Cardiac septum (tissue), 1 donor: ENCODE measurements at regions of chr6 and their contacts with region 1.

Region 1: DNA sequence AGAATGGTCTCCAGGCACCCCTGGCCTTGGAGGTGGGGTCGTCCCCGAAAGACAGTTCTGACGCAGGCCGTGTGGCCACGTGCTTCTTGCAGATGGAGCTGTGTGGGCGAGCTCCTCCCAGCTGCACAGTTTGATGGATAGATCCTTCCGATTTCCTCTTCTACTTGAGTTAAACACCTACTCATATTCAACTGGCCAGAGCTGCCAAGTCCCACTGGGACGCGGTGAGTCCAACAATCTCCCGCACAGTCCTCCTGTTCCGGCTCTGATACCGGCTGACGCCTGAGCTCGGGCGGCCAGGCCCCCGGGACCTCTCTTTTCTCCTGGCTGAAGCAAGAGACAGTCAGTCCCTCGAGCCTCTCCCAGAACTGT is 57.9 kb upstream of the DACT2 start:
- DNase-seq: no peak

Region 2: GRCh38 chr6:168440520-168441433 is 63.3 kb after region 1 on chr6 and contains the start of gene SMOC2:
- intact Hi-C with region 1: loop called (anchors 5 kb)
- DNase-seq: no peak
- total RNA-seq, gene SMOC2: 37.2 TPM

Region 3: DNA sequence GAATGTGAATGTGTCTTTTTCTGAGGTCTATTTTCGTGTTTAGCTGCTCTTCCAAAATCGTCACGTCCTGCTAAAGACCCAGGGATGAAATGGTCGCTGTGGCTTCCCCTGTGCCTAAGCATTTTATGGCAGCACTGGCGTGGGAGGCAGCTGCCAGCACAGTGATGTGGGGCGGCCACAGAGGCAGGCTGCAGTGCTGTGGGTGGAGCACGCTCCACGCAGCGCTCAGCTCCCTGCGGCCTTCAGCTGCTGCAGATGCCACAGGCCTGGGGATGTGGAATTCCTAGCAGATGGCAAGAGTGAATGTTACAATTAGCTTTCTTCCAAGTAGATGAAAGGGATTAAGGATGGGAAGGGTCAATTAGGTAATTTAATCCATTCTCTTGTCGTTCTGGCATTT is 306.2 kb after region 1 on chr6:
- intact Hi-C with region 1: no loop called
- DNase-seq: no peak